ENCODE measurements at regions of chr11 and their contacts with region 1.

Region 1: GRCh38 chr11:73198677-73199076 is 19.4 kb upstream of the P2RY2 start:
- DNase-seq: peak; percentile 0
- H3K4me3 ChIP-seq: no peak overlapping the region
- H3K27ac ChIP-seq: no peak overlapping the region
- H3K4me1 ChIP-seq: peaks cover 10 to 44% (median 27%) of the 10 kb centered on the region in 4 donors
- H3K27me3 ChIP-seq: no peaks in the 10 kb centered on the region
- CTCF ChIP-seq: no peak
- EP300 ChIP-seq: no peak
- POLR2A ChIP-seq: no peak

Region 2: GRCh38 chr11:73288873-73289707 is 90.4 kb after region 1 on chr11:
- in situ Hi-C with region 1: no loop called
- intact Hi-C with region 1: loop called (anchors 10 kb)
- DNase-seq: peak; percentile 77
- H3K4me3 ChIP-seq: peak overlapping the region in 1 of 4 donors; percentile 28
- H3K27ac ChIP-seq: peak overlapping the region; percentile 15 to 47 (median 39)
- H3K4me1 ChIP-seq: peaks cover 3 to 13% (median 10%) of the 10 kb centered on the region in 4 donors
- H3K27me3 ChIP-seq: no peaks in the 10 kb centered on the region
- CTCF ChIP-seq: peak; percentile 81 to 89 (median 83)
- EP300 ChIP-seq: no peak
- POLR2A ChIP-seq: no peak